Naive thymus-derived CD4-positive, alpha-beta T cell (primary cell): ENCODE measurements at regions of chr6 and their contacts with region 1.

Region 1: DNA sequence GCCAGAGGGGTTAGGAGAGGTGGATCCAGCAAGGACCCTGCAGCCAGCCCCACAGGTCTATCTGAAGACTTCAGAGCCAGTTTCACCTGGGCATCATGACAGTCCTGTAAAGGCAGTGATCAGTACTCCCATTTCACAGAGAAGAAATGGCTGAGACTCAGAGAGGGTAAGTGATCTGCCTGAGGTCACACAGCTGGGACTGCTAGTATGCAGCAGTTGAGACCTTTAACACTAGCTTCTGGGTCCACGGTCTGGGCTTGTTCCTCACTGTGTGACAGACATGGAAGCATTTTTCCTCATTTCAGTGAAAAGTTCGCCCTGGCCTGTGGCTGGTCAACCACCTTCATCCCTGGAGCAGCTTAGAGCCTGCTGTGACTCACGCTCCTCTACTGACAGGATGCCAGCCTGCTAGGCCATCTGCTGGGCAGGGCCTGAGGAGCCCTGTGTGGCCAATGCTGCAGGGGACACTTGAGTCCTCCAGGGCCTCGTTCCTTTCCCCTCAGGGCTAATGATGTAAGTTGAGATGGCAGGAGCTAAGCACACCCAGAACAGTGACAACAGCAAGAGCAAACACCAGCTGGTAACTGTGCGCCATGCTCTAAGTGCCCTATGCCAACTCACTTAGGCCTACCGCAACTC is 192.0 kb downstream of the LRFN2 start:
- DNase-seq: peak in 1 of 9 donors; percentile 15
- ATAC-seq: no peak
- H3K4me3 ChIP-seq: no peak overlapping the region
- H3K4me3 Mint-ChIP-seq: peak overlapping the region in 1 of 10 donors; percentile 38
- H3K27ac ChIP-seq: no peak overlapping the region
- H3K27ac Mint-ChIP-seq: peak overlapping the region in 1 of 9 donors; percentile 73
- H3K4me1 ChIP-seq: peaks cover 0 to 20% of the 10 kb centered on the region in 2 donors
- H3K4me1 Mint-ChIP-seq: peaks cover 7 to 50% (median 12%) of the 10 kb centered on the region in 7 donors
- H3K27me3 ChIP-seq: no peaks in the 10 kb centered on the region
- H3K27me3 Mint-ChIP-seq: peaks cover 0 to 6% (median 0%) of the 10 kb centered on the region in 5 donors

Region 2: DNA sequence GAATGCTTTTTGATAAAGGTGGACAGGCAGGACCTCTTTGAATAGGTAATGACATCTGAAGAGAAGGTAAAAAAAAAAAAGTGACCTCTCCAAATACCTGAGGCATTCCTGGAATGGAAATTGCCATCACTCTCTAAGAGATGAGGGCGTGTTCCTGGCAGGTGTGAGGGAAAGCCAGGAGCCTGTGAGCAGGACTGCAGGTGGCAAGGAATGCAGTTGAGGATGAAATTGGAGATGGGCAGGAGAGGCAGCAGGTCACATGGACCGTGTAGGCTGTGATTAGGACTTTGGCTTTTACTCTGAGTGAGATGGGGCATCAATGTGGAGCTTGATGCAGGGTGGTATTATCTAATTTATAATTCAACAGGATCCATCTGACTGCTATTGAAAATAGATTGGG is 35.4 kb before region 1 on chr6:
- CTCF ChIA-PET with region 1: no interaction called
- POLR2A ChIA-PET with region 1: no interaction called
- intact Hi-C with region 1: loop called in 1 of 2 experiments (anchors 5 kb)
- DNase-seq: no peak
- ATAC-seq: no peak
- H3K4me3 ChIP-seq: no peak overlapping the region
- H3K4me3 Mint-ChIP-seq: no peak overlapping the region
- H3K27ac ChIP-seq: no peak overlapping the region
- H3K27ac Mint-ChIP-seq: no peak overlapping the region
- H3K4me1 ChIP-seq: no peaks in the 10 kb centered on the region
- H3K4me1 Mint-ChIP-seq: peaks cover 0 to 18% (median 0%) of the 10 kb centered on the region in 7 donors
- H3K27me3 ChIP-seq: no peaks in the 10 kb centered on the region
- H3K27me3 Mint-ChIP-seq: peaks cover 0 to 30% (median 28%) of the 10 kb centered on the region in 5 donors

Region 3: DNA sequence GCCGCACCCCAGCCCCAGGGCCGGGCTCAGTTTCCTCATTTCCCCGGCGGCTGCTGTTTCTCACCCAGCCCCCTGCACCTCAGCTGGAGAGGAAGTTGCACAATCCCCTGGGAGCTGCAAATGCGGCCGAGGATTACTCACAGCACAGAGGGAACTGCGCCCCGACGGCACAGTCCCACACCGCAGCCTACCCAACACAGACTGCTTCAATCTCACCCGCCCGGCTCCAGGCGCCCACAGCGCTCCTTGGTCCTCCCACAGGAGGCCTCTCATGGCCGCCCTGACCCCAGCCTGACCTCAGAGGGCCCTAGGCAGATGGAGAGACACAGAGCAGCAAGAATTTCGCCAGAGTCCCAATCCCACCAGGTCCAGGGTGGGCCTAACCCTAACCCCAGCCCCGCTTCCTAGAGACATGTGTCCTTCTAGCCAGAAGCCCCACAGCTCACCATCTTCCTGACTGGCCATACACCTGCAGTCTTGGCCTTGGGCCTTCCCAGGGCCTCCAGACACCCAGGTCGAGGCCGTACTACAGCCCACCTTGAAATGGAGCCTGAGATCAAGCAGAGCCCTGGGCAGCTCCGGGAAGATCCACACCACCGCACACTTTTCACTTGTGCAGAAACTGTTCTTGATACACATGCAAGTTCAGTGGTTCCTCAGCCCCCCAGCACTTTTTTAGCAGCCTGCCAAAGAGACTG is 1328.5 kb after region 1 on chr6:
- CTCF ChIA-PET with region 1: no interaction called
- POLR2A ChIA-PET with region 1: no interaction called
- intact Hi-C with region 1: no loop called
- DNase-seq: peak in 1 of 9 donors; percentile 20
- ATAC-seq: peak; percentile 91
- H3K4me3 ChIP-seq: no peak overlapping the region
- H3K4me3 Mint-ChIP-seq: no peak overlapping the region
- H3K27ac ChIP-seq: no peak overlapping the region
- H3K27ac Mint-ChIP-seq: no peak overlapping the region
- H3K4me1 ChIP-seq: no peaks in the 10 kb centered on the region
- H3K4me1 Mint-ChIP-seq: peaks cover 7 to 35% (median 14%) of the 10 kb centered on the region in 7 donors
- H3K27me3 ChIP-seq: no peaks in the 10 kb centered on the region
- H3K27me3 Mint-ChIP-seq: no peaks in the 10 kb centered on the region